GM10248 (cell line): ENCODE measurements at regions of chr6 and their contacts with region 1.

Region 1: DNA sequence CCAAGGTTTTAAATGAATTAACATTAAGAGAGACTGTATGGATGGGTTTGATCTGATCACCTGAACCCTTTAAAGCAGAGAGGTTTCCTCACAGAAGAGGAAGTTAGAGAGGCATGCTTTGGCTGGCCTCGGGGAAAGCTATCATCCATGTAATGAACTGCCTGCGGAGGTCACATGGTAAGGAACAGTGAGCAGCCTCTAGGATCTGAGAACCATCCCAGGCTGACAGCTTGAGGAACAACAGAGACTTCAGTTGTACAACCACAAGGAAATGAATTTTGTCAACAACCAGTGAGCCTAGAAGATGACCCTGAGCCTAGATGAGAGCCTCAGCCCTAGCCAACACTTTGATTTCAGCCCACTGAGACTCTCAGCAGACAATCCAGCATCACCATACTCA is 2.9 kb upstream of the COL21A1 start:
- DNase-seq: no peak
- CTCF ChIP-seq: no peak

Region 2: GRCh38 chr6:56263596-56264315 is 13.5 kb after region 1 on chr6:
- CTCF ChIA-PET with region 1: interaction called, 20 read pairs
- POLR2A ChIA-PET with region 1: no interaction called
- DNase-seq: no peak
- CTCF ChIP-seq: no peak